CD4-positive, alpha-beta memory T cell (primary cell): ENCODE measurements at regions of chr17 and their contacts with region 1.

Region 1: GRCh38 chr17:29133146-29133713 is 47.0 kb downstream of the MYO18A start:
- DNase-seq: no peak
- H3K4me3 ChIP-seq: no peak overlapping the region
- H3K4me3 Mint-ChIP-seq: no peak overlapping the region
- H3K27ac ChIP-seq: no peak overlapping the region
- H3K27ac Mint-ChIP-seq: peak overlapping the region in 3 of 7 donors; percentile 30 to 53 (median 46)
- H3K4me1 ChIP-seq: peaks cover 62% of the 10 kb centered on the region
- H3K4me1 Mint-ChIP-seq: peaks cover 30 to 72% (median 43%) of the 10 kb centered on the region in 4 donors
- H3K27me3 ChIP-seq: no peaks in the 10 kb centered on the region
- H3K27me3 Mint-ChIP-seq: no peaks in the 10 kb centered on the region

Region 2: DNA sequence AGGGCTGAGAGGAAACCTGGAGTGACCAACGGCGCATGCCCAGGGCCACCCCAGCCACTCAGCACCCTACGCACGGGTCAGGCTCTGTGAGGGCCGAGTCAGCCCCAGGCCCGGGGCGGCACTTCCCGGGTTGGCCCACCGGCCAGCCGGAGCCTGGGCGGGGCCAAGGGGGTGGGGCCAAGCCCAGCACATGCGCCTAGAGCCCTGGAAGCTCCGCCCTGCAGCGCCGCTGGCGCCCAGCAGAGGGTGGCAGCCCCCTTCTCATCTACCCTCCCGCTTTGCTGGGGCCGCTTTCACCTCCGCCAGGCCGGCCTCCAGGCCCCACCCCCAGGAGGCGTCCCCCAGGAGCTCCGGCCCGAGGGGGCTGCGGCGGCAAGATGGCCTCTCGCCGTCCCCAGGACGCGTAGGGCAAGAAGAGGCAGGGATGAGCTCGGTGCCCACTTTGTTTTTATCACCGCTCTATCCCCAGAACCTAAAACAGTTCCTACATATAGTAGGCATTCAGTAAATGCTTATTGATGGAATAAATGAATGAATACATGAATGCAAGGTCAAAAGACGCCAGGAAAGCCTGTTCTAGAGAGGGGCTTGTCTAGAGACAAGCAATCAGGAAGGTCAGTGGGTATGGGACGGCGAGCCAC is 15.7 kb after region 1 on chr17:
- CTCF ChIA-PET with region 1: interaction called, 44 read pairs
- POLR2A ChIA-PET with region 1: interaction called, 50 read pairs
- intact Hi-C with region 1: no loop called
- DNase-seq: peak; percentile 88 to 91 (median 89)
- H3K4me3 ChIP-seq: peak overlapping the region; percentile 41 to 42
- H3K4me3 Mint-ChIP-seq: peak overlapping the region; percentile 68 to 84 (median 75)
- H3K27ac ChIP-seq: peak overlapping the region; percentile 53
- H3K27ac Mint-ChIP-seq: peak overlapping the region; percentile 66 to 92 (median 90)
- H3K4me1 ChIP-seq: peaks cover 27% of the 10 kb centered on the region
- H3K4me1 Mint-ChIP-seq: peaks cover 23 to 62% (median 33%) of the 10 kb centered on the region in 4 donors
- H3K27me3 ChIP-seq: no peaks in the 10 kb centered on the region
- H3K27me3 Mint-ChIP-seq: no peaks in the 10 kb centered on the region